OCI-LY7 (cell line): ENCODE measurements at regions of chr3 and their contacts with region 1.

Region 1: DNA sequence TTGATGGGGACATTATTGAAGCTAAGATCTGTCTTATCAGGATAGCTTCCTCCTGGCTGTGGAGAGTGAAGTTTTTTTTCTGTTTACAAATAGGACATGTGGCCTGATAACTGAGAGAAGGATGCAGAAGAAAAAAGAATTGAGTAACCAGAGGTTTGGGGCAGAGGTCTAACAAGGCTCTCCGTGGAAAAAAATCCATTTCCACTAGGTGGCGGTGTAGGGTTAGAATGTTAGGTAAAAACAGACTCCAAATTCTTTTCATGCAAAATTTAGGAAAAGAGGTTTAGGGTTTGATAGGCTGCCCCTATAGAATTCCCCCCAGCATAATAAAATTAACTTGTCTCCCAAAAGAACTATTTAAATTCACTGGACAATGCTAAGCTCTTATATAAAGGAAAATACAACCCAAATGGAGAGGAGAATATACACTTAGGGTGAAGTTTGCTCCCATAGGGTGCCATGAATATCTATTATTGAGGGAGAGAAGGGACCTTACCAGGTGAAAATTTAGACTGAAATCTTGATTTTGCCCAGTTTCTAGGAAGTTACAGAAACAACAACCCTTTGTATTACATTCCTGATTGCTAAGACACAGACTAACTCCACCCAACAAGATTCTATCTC is 1560.4 kb downstream of the OTOL1 start:
- DNase-seq: peak; percentile 44
- H3K4me3 ChIP-seq: no peak overlapping the region
- H3K27ac ChIP-seq: no peak overlapping the region
- H3K4me1 ChIP-seq: no peaks in the 10 kb centered on the region
- CTCF ChIP-seq: peak; percentile 88

Region 2: DNA sequence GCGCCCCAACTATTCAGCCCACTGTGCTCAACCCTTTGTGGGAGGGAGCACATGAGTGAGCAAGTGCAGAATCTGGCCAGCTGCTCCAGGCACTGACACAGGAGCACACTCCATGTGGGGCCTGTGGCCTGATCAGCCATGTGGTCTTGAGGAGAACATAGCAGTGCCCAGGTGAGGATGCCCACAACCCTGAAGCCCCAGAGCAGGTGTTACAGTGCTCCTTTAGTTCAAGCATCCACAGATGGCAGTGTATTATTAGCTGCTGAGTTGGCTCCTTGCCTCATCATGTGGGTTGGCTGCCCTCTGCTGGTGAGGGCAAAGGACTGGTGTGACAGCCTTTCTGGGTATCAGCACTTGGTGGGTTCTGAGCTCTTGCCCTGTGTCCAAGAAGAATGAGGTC is 433.1 kb after region 1 on chr3:
- CTCF ChIA-PET with region 1: no interaction called
- POLR2A ChIA-PET with region 1: no interaction called
- intact Hi-C with region 1: loop called (anchors 5 kb)
- DNase-seq: peak; percentile 21
- H3K4me3 ChIP-seq: no peak overlapping the region
- H3K27ac ChIP-seq: no peak overlapping the region
- H3K4me1 ChIP-seq: no peaks in the 10 kb centered on the region
- CTCF ChIP-seq: peak; percentile 68